ENCODE measurements at regions of chr17 and their contacts with region 1.

Region 1: DNA sequence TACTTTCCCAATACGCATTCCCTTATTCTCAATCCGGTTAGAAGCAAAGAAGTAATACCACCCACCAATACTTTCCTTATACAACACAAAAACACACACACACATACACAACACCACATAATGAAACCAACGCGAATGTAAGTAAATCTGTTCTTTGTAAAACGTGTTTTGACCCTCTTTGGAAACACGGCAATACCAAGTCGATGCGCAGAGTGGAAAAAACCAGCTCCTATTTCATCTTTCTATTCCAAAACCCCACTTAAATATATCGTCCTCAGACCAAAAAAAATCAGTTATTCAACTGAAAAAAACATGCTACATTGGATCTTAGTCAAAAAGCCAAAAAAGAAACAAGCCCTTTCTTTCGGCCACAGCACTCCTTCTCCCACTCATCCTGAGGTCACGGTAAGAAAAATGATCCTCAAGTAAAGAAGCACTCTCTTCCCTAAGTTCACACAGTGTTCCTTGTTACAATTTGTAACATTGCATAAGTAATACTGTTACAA is 31.0 kb upstream of the ARL4D start:
- DNase-seq: no peak
- ATAC-seq: peak; percentile 18 to 25
- H3K4me3 ChIP-seq: peak overlapping the region; percentile 59 to 78 (median 66)
- H3K27ac ChIP-seq: peak overlapping the region; percentile 95 to 100 (median 97)
- H3K4me1 ChIP-seq: peaks cover 15 to 24% of the 10 kb centered on the region in 2 donors
- H3K27me3 ChIP-seq: no peaks in the 10 kb centered on the region
- CTCF ChIP-seq: no peak
- POLR2A ChIP-seq: no peak

Region 2: DNA sequence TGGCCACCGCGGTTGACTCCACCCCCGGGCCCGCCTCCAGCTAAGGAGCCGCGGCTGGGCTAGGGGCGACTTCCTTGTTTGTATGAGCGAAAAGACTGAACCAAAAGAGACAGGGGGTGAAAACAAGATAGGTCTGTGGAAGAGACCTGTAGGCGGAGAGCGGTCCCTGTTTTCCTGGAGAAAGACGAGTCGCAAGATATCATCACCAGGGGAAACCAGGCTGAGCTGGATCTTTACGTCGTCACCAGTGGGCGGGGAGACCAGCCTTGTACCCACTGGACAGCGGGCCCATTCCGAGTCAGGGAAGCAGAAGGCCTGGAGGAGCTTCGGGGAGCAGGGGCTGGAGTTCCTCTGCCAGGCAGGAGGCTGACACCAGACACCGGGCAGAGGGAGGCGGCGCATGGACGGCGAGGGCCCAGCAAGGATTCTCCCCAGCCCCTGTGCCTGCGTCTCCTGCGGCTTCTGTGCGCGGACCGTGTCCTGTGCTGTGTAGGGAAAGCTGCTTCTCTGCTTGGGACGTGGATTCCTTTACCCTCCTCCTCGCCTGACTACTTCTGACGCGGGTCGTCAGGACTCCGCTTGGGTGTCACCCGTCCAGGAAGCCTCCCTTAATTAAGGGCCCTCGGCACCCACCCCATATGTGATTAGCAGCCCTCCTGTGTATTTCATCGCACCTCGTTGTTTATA is 20.7 kb after region 1 on chr17:
- in situ Hi-C with region 1: no loop called
- intact Hi-C with region 1: loop called (anchors 1 kb)
- DNase-seq: peak; percentile 93 to 94
- ATAC-seq: peak; percentile 90 to 93
- H3K4me3 ChIP-seq: peak overlapping the region; percentile 64 to 88 (median 70)
- H3K27ac ChIP-seq: peak overlapping the region; percentile 93 to 100 (median 98)
- H3K4me1 ChIP-seq: peaks cover 0 to 6% of the 10 kb centered on the region in 2 donors
- H3K27me3 ChIP-seq: no peaks in the 10 kb centered on the region
- CTCF ChIP-seq: no peak
- POLR2A ChIP-seq: peak; percentile 92 to 97

Region 3: GRCh38 chr17:43431714-43432523 is 64.1 kb after region 1 on chr17:
- in situ Hi-C with region 1: no loop called
- intact Hi-C with region 1: no loop called
- DNase-seq: no peak
- ATAC-seq: peak; percentile 69 to 70
- H3K4me3 ChIP-seq: no peak overlapping the region
- H3K27ac ChIP-seq: peak overlapping the region in 1 of 4 donors; percentile 34
- H3K4me1 ChIP-seq: no peaks in the 10 kb centered on the region
- H3K27me3 ChIP-seq: peaks cover 0 to 5% (median 5%) of the 10 kb centered on the region in 3 donors
- CTCF ChIP-seq: no peak
- POLR2A ChIP-seq: no peak

Measured in gastrocnemius medialis (tissue), 4 donors.